A549 (cell line): ENCODE measurements at regions of chr3 and their contacts with region 1.

Region 1: GRCh38 chr3:10883478-10884234 is 67.6 kb downstream of the SLC6A11 start:
- DNase-seq: peak; percentile 18 to 31
- ATAC-seq: peak in 1 of 2 experiments; percentile 74; a peak in 3 of 6 replicates
- H3K4me3 ChIP-seq: no peak overlapping the region
- H3K27ac ChIP-seq: no peak overlapping the region
- H3K4me1 ChIP-seq: no peaks in the 10 kb centered on the region
- CTCF ChIP-seq: peak; percentile 68
- EP300 ChIP-seq: no peak
- POLR2A ChIP-seq: no peak
- RAD21 ChIP-seq: peak; percentile 56 to 58

Region 2: DNA sequence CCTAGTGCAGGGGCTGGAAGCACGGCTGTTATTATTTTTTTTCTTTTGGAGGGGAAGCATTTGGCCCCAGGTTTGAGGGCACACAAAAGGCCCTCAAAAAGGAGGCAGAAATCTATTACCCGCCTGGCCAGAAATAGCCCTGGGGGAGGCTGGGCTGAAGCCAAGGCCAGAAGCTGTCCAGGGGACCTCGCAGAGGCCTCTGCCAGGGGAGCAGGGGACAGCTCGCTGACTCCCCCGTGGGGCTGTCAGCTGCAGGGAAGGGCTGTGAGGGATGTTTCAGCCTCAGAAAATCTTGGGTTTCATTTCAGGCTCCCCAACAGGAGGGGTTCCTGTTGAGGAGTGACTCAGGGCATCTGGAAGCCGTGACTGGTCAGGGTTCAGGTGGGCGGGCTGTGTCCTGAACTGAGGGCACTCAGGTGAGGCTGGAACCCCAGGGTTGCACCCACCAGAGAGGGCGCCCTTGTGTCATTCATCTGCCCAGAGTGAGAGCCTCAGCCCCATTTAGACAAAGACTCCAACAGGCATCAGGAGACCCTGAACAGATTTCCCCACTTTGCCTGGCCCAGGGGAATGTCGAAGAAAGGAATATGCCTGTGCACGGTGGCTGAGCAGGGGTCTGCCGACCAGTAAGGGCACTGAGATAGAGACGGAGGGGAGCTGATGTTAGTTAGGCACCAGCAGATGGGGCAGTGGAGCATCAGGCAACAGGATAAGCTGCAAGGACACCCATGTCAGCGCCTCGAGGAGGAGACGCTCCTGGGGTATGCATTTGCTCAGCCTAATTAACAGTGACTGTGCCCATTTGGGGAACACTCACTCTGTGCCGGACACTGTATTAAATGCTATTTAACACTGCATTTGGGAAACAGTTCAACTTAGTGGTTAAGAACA is 111.1 kb before region 1 on chr3:
- CTCF ChIA-PET with region 1: interaction called, 16 read pairs
- POLR2A ChIA-PET with region 1: no interaction called
- DNase-seq: peak; percentile 37 to 43
- ATAC-seq: peak; percentile 75 to 91
- H3K4me3 ChIP-seq: no peak overlapping the region
- H3K27ac ChIP-seq: no peak overlapping the region
- H3K4me1 ChIP-seq: no peaks in the 10 kb centered on the region
- CTCF ChIP-seq: peak; percentile 59
- EP300 ChIP-seq: no peak
- POLR2A ChIP-seq: no peak
- RAD21 ChIP-seq: peak in 1 of 2 experiments; percentile 21; a peak in 1 of 5 replicates

Region 3: DNA sequence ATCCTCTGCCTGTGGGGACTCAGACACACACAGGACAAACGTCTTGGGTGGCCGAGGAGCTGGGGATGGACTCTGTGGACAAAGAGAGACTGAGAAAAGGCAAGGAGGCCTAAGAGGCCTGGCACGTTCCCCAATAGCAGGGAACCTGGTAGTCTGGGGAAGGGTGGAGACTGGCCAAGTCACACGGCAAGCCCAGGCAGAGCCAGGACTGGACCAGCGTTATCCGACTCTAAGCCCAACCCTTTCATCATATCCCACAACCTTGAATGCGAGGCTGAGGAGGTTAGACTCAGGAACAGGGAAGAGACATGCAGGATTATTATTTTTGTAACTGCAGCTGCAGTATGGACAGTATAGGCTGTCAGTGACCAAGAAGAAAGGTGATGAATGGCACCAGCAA is 14.2 kb before region 1 on chr3:
- CTCF ChIA-PET with region 1: interaction called, 21 read pairs
- POLR2A ChIA-PET with region 1: no interaction called
- DNase-seq: no peak
- ATAC-seq: no peak
- H3K4me3 ChIP-seq: no peak overlapping the region
- H3K27ac ChIP-seq: no peak overlapping the region
- H3K4me1 ChIP-seq: no peaks in the 10 kb centered on the region
- CTCF ChIP-seq: no peak
- EP300 ChIP-seq: no peak
- POLR2A ChIP-seq: no peak
- RAD21 ChIP-seq: no peak